ENCODE measurements at regions of chr19 and their contacts with region 1.

Region 1: GRCh38 chr19:53520550-53521372 is 17.2 kb upstream of the ZNF331 start:
- DNase-seq: peak; percentile 93
- H3K4me3 Mint-ChIP-seq: peak overlapping the region; percentile 99
- H3K27ac Mint-ChIP-seq: peak overlapping the region; percentile 83
- H3K4me1 Mint-ChIP-seq: peaks cover 17% of the 10 kb centered on the region
- H3K27me3 Mint-ChIP-seq: no peaks in the 10 kb centered on the region

Region 2: DNA sequence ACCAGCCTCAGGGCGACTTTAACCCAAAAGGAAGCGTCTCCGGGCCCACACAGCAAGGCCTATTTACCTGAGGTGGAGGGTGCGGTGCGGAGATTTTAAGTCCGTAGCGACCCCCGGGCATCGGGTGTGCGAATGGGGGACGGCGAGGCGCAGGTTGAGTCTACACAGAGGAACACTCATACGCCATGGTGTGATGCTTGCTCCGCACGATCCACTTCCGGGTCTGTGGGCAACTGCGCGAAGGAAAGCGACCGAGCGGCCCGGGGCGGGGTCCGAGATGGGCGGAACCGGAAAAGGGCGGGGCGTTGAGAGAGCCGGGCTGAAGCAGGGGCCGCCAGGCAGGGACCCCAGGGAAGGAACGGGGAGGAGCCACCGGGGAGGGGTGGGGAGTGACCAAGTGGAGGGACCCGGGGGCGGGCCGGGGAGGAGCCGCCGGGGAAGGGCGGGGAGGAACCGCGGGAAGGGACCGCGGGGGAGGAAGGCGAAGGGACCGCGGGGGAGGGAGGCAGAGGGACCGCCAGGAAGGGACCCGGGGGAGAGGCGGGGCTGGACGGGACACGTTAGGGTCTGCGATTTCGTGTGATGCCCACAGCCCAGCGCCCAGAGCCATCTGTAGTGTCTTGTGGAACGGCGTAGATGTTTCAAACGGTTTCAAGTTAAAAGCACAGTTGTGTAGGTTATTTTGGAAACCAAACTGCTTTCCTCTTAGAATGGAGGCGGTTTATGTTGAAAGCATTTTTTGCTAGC is 417.4 kb before region 1 on chr19 and contains the start of gene ZNF160:
- CTCF ChIA-PET with region 1: no interaction called
- intact Hi-C with region 1: loop called (anchors 1 kb)
- DNase-seq: peak; percentile 99
- H3K4me3 Mint-ChIP-seq: peak within 1 kb of the TSS; percentile 82
- H3K27ac Mint-ChIP-seq: peak within 1 kb of the TSS; percentile 84
- H3K4me1 Mint-ChIP-seq: peaks cover 22% of the 10 kb centered on the region
- H3K27me3 Mint-ChIP-seq: no peaks in the 10 kb centered on the region
- total RNA-seq, gene ZNF160: 23.5 to 25.2 TPM

Region 3: GRCh38 chr19:53431399-53432087 is 89.2 kb before region 1 on chr19 and contains the start of gene ZNF761:
- CTCF ChIA-PET with region 1: no interaction called
- intact Hi-C with region 1: loop called (anchors 2 kb)
- DNase-seq: peak; percentile 97
- H3K4me3 Mint-ChIP-seq: peak within 1 kb of the TSS; percentile 83
- H3K27ac Mint-ChIP-seq: peak within 1 kb of the TSS; percentile 88
- H3K4me1 Mint-ChIP-seq: peaks cover 21% of the 10 kb centered on the region
- H3K27me3 Mint-ChIP-seq: no peaks in the 10 kb centered on the region
- total RNA-seq, gene ZNF761: 8.7 to 10.0 TPM

Region 4: GRCh38 chr19:53467485-53468262 is 53.1 kb before region 1 on chr19 and contains the start of gene ZNF813:
- CTCF ChIA-PET with region 1: no interaction called
- intact Hi-C with region 1: loop called (anchors 1 kb)
- DNase-seq: peak; percentile 98
- H3K4me3 Mint-ChIP-seq: peak within 1 kb of the TSS; percentile 88
- H3K27ac Mint-ChIP-seq: peak within 1 kb of the TSS; percentile 83
- H3K4me1 Mint-ChIP-seq: peaks cover 20% of the 10 kb centered on the region
- H3K27me3 Mint-ChIP-seq: peaks cover 21% of the 10 kb centered on the region
- total RNA-seq, gene ZNF813: 4.5 to 5.6 TPM

Region 5: GRCh38 chr19:53537480-53538383 is 17.0 kb after region 1 on chr19 and contains the start of gene ZNF331:
- CTCF ChIA-PET with region 1: interaction called, 3 read pairs
- intact Hi-C with region 1: loop called (anchors 1 kb)
- DNase-seq: peak; percentile 88
- H3K4me3 Mint-ChIP-seq: peak within 1 kb of the TSS; percentile 94
- H3K27ac Mint-ChIP-seq: peak within 1 kb of the TSS; percentile 92
- H3K4me1 Mint-ChIP-seq: peaks cover 22% of the 10 kb centered on the region
- H3K27me3 Mint-ChIP-seq: no peaks in the 10 kb centered on the region
- total RNA-seq, gene ZNF331: 35.5 to 36.9 TPM

Region 6: GRCh38 chr19:53553884-53554791 is 33.4 kb after region 1 on chr19:
- CTCF ChIA-PET with region 1: no interaction called
- intact Hi-C with region 1: loop called (anchors 1 kb)
- DNase-seq: peak; percentile 94
- H3K4me3 Mint-ChIP-seq: peak overlapping the region; percentile 94
- H3K27ac Mint-ChIP-seq: peak overlapping the region; percentile 99
- H3K4me1 Mint-ChIP-seq: peaks cover 31% of the 10 kb centered on the region
- H3K27me3 Mint-ChIP-seq: no peaks in the 10 kb centered on the region

Region 7: GRCh38 chr19:54102421-54103169 is 581.8 kb after region 1 on chr19 and contains the start of gene NDUFA3:
- CTCF ChIA-PET with region 1: no interaction called
- intact Hi-C with region 1: loop called (anchors 1 kb)
- DNase-seq: peak; percentile 98
- H3K4me3 Mint-ChIP-seq: peak within 1 kb of the TSS; percentile 99
- H3K27ac Mint-ChIP-seq: peak within 1 kb of the TSS; percentile 92
- H3K4me1 Mint-ChIP-seq: peaks cover 28% of the 10 kb centered on the region
- H3K27me3 Mint-ChIP-seq: no peaks in the 10 kb centered on the region
- total RNA-seq, gene NDUFA3: 110 to 120 TPM